Colonic mucosa (tissue), 4 donors: ENCODE measurements at regions of chr18 and their contacts with region 1.

Region 1: DNA sequence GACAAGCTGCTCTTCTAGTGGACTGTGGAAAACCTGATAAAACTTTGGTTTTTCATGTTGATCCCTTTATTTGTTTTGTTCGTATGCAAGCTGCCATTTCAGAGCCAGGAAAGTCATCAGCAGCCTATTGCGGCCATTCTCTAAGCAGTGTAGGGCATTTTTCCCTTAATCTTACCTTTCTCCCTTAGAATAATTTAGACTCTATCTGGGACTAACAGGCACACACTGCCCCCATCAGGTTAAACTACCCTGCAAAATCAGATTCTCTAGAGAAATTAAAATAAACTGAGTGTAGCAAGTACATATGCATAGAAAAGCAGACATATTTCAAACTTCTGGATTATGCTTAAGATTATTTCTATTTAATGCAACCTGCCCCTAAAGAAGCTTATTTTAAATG is 347.5 kb downstream of the METTL4 start:
- DNase-seq: peak; percentile 51
- H3K4me3 ChIP-seq: no peak overlapping the region
- H3K27ac ChIP-seq: no peak overlapping the region
- H3K4me1 ChIP-seq: no peaks in the 10 kb centered on the region
- H3K27me3 ChIP-seq: no peaks in the 10 kb centered on the region
- CTCF ChIP-seq: peak; percentile 45

Region 2: DNA sequence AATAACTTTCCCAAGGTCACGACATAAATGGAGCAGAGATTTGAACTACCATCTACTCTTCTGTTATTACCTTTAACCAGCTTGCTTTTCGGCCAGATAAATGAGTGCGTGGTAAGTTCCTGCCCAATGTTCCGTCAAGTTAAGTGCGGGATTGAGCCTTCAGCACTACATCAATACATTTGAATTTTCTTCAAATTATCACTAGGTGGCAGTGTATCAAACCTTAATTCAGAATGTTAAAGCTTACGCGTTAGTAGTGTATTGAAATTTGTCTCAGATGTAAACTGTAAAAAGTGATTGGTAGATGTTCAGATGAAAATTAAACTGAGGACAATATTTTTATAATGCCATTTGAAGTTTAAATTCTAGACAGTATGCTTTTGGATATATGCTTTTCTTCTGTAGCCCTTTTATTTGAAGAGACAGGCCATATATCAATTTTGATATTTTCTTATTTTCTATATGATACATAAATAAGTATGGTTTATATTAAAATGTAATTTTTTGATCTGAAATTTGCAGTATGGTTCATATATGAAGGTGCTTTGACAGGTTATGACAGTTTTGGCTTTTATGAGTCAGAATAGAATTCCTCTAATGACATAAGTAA is 637.9 kb before region 1 on chr18:
- intact Hi-C with region 1: loop called (anchors 10 kb)
- DNase-seq: no peak
- H3K4me3 ChIP-seq: no peak overlapping the region
- H3K27ac ChIP-seq: no peak overlapping the region
- H3K4me1 ChIP-seq: no peaks in the 10 kb centered on the region
- H3K27me3 ChIP-seq: no peaks in the 10 kb centered on the region
- CTCF ChIP-seq: peak; percentile 42

Region 3: GRCh38 chr18:2104620-2105462 is 119.0 kb before region 1 on chr18:
- intact Hi-C with region 1: loop called (anchors 5 kb)
- DNase-seq: peak; percentile 50
- H3K4me3 ChIP-seq: no peak overlapping the region
- H3K27ac ChIP-seq: no peak overlapping the region
- H3K4me1 ChIP-seq: no peaks in the 10 kb centered on the region
- H3K27me3 ChIP-seq: no peaks in the 10 kb centered on the region
- CTCF ChIP-seq: peak; percentile 76